Prostate gland (tissue), 2 donors: ENCODE measurements at regions of chr22 and their contacts with region 1.

Region 1: GRCh38 chr22:46542011-46542985 is 4.9 kb upstream of the CELSR1 start:
- DNase-seq: peak; percentile 70
- H3K4me3 ChIP-seq: no peak overlapping the region
- H3K27ac ChIP-seq: peak overlapping the region; percentile 63 to 85
- H3K4me1 ChIP-seq: peaks cover 21% of the 10 kb centered on the region
- H3K27me3 ChIP-seq: no peaks in the 10 kb centered on the region
- CTCF ChIP-seq: peak; percentile 83 to 97 (median 96)
- POLR2A ChIP-seq: no peak

Region 2: GRCh38 chr22:46367707-46368191 is 174.5 kb before region 1 on chr22:
- intact Hi-C with region 1: loop called (anchors 2 kb)
- DNase-seq: peak; percentile 68
- H3K4me3 ChIP-seq: no peak overlapping the region
- H3K27ac ChIP-seq: no peak overlapping the region
- H3K4me1 ChIP-seq: no peaks in the 10 kb centered on the region
- H3K27me3 ChIP-seq: no peaks in the 10 kb centered on the region
- CTCF ChIP-seq: peak; percentile 88 to 98 (median 96)
- POLR2A ChIP-seq: no peak